Activated CD4-positive, alpha-beta memory T cell treated with anti-CD3 and anti-CD28 coated beads, Interleukin-2, amount 10 ng/mL, durations not matched to agents 7 days and 5 days (primary cell): ENCODE measurements at regions of chr12 and their contacts with region 1.

Region 1: DNA sequence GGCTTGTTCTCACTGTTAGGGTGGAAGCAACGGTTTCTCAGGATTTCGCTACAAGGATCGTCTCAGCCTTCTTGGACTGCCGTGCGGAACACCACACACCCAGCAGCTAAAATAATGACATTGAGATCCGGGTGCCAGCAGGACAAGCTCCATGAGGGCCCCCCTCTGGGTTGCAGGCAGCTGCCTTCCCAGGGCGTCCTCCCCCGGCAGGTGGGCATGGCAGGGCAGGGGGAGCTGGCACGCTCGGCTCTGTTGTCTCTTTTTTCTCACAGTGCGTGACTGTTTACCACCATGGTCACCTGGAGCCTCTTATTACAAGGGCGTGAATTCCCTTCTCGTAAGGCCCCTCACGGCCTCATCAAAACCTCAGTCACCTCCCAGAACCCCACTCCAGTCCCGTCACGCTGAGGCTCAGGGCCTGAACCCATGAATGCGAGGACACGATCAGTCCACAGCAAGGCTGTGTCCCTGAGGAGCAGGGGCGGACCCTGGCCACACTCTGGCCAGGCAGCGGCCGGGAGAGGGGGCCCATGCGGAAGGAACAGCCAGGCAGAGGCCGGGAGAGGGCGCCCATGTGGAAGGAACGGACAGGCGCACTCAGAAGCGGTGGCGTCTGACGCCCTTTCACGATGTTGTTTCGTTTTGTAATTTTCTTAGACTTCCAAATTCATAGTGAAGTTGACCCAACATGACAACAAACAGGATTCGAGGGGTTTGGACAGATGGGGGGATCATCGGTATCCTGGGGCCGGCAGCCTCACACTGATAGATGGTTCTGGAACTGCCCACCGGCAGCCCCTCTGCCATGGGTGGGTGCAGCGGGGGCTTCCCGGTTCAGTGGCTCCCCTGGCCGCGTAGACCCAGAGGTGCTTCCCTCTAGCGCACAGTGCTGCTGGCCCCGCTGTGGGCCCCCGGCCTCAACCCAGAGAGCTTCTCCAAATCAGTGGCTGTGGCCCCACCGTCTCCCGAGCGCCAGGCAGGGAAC is 10.0 kb downstream of the LRCOL1 start:
- DNase-seq: peak; percentile 47
- H3K4me3 Mint-ChIP-seq: peak overlapping the region; percentile 64
- H3K27ac Mint-ChIP-seq: no peak overlapping the region
- H3K4me1 Mint-ChIP-seq: peaks cover 22% of the 10 kb centered on the region
- H3K27me3 Mint-ChIP-seq: peaks cover 55% of the 10 kb centered on the region

Region 2: GRCh38 chr12:132490481-132491348 is 109.6 kb before region 1 on chr12:
- CTCF ChIA-PET with region 1: no interaction called
- POLR2A ChIA-PET with region 1: no interaction called
- DNase-seq: peak; percentile 36
- H3K4me3 Mint-ChIP-seq: peak overlapping the region; percentile 81
- H3K27ac Mint-ChIP-seq: peak overlapping the region; percentile 64
- H3K4me1 Mint-ChIP-seq: peaks cover 46% of the 10 kb centered on the region
- H3K27me3 Mint-ChIP-seq: no peaks in the 10 kb centered on the region

Region 3: DNA sequence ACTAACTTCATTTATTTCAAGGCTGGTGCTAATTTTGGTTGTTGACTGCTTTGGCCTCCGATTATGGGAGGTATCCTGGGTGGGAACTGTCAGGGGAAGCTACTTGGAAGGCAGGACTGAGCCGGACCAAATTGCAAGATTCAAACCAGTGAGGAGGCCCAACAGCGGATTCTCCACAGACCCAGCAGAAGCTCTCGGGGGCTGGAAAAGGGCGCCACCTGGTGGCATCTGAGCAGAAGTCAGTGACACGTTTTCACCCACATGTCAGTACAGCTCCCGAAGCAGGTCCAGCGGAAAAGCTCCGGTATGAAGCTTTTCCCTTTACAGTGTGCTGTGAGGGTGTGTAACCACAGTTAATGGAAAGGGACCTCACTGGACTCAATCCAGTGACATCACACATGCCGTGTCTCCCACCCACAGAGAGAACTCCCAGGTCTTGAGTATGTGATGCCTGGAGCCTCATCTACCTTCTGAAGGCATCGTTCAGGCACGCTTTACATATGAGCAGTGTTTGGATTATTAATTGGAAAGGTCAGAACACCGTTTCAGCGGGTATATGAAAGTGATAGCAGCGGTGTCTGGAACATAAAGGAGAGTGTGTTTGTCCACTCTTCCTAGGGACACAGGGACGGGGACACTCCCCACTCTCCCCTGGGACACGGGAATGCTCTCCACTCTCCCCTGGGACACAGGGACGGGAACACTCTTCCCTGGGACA is 14.7 kb after region 1 on chr12:
- CTCF ChIA-PET with region 1: interaction called, 14 read pairs
- POLR2A ChIA-PET with region 1: interaction called, 3 read pairs
- DNase-seq: peak; percentile 81
- H3K4me3 Mint-ChIP-seq: no peak overlapping the region
- H3K27ac Mint-ChIP-seq: no peak overlapping the region
- H3K4me1 Mint-ChIP-seq: peaks cover 5% of the 10 kb centered on the region
- H3K27me3 Mint-ChIP-seq: peaks cover 31% of the 10 kb centered on the region